ENCODE measurements at regions of chr2 and their contacts with region 1.

Region 1: GRCh38 chr2:8984157-8984556 is 19.3 kb downstream of the MBOAT2 start:
- DNase-seq: no peak
- H3K4me3 ChIP-seq: no peak overlapping the region
- H3K27ac ChIP-seq: no peak overlapping the region
- H3K4me1 ChIP-seq: no peaks in the 10 kb centered on the region
- H3K27me3 ChIP-seq: no peaks in the 10 kb centered on the region
- CTCF ChIP-seq: no peak
- POLR2A ChIP-seq: no peak

Region 2: GRCh38 chr2:10548626-10549025 is 1564.5 kb after region 1 on chr2:
- intact Hi-C with region 1: loop called (anchors 5 kb)
- DNase-seq: no peak
- H3K4me3 ChIP-seq: peak overlapping the region in 1 of 3 donors; percentile 16
- H3K27ac ChIP-seq: no peak overlapping the region
- H3K4me1 ChIP-seq: no peaks in the 10 kb centered on the region
- H3K27me3 ChIP-seq: peaks cover 0 to 10% of the 10 kb centered on the region in 2 donors
- CTCF ChIP-seq: no peak
- POLR2A ChIP-seq: no peak

Measured in breast epithelium (tissue), 4 donors.